ENCODE measurements at regions of chr14 and their contacts with region 1.

Region 1: GRCh38 chr14:63795532-63795931 is 57.3 kb upstream of the SYNE2 start:
- DNase-seq: no peak
- H3K4me3 ChIP-seq: no peak overlapping the region
- H3K27ac ChIP-seq: no peak overlapping the region
- H3K4me1 ChIP-seq: peaks cover 0 to 13% (median 4%) of the 10 kb centered on the region in 4 donors
- H3K27me3 ChIP-seq: no peaks in the 10 kb centered on the region
- CTCF ChIP-seq: no peak

Region 2: GRCh38 chr14:63840981-63841380 is 45.4 kb after region 1 on chr14:
- intact Hi-C with region 1: no loop called
- DNase-seq: no peak
- H3K4me3 ChIP-seq: no peak overlapping the region
- H3K27ac ChIP-seq: no peak overlapping the region
- H3K4me1 ChIP-seq: no peaks in the 10 kb centered on the region
- H3K27me3 ChIP-seq: no peaks in the 10 kb centered on the region
- CTCF ChIP-seq: no peak

Region 3: DNA sequence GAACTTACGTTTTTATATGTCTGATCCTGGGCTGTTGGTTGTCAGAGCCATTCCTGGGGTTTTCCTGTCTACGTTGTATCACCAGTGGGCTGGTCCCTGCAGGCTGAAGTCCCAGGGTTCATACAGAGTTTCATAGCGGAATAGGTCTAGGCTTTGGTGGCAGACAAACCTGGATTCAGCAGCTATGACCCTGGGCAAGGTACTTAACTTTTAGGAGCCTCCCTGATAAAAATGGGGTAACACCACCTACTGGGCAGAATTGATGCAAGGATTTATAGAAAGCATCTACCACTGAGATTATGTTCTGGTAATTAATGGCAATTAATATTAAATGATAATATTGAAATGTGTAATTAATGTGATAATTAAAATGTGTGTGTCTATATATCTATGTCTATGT is 198.5 kb after region 1 on chr14:
- intact Hi-C with region 1: loop called (anchors 10 kb)
- DNase-seq: no peak
- H3K4me3 ChIP-seq: no peak overlapping the region
- H3K27ac ChIP-seq: no peak overlapping the region
- H3K4me1 ChIP-seq: no peaks in the 10 kb centered on the region
- H3K27me3 ChIP-seq: no peaks in the 10 kb centered on the region
- CTCF ChIP-seq: peak in 1 of 2 experiments; percentile 19

Region 4: GRCh38 chr14:64294672-64295413 is 499.3 kb after region 1 on chr14:
- intact Hi-C with region 1: loop called (anchors 10 kb)
- DNase-seq: peak in 1 of 2 donors; percentile 69
- H3K4me3 ChIP-seq: peak overlapping the region; percentile 10 to 44
- H3K27ac ChIP-seq: no peak overlapping the region
- H3K4me1 ChIP-seq: peaks cover 0 to 15% (median 14%) of the 10 kb centered on the region in 4 donors
- H3K27me3 ChIP-seq: peaks cover 0 to 52% of the 10 kb centered on the region in 2 donors
- CTCF ChIP-seq: peak; percentile 40 to 53